Spleen (tissue), 13 donors: ENCODE measurements at regions of chr3 and their contacts with region 1.

Region 1: DNA sequence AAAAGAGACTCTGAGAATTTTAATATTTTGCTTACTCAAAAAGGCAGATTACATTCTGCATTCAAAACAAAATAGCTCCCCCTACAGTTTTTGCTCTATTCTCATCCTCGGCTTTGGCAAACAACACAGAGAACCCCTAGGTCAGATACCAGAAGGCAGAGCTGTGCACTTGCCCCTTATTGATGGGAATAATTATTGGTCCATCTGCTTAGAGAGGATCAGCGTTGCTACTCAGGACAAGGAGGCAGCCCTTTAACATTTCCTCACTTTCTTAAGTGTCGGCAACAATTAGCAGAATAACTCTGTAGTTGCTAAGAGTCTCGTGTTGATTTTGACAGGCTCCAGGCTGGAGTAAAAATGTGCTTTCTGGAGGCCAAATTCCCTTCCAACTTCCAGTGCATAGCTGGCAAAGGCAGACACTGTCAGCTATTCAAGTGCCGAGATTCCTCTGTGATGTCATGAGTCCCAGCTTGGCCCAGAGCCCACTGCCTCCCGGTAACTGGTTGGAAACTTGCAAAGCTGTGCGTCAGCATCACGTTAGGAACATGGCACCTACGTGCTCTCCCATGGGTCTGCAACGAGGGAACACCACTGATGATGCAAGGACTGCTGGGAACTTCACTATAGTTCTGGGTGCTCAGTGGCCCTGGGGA is 482.7 kb upstream of the ADAMTS9 start:
- DNase-seq: no peak
- H3K4me3 ChIP-seq: no peak overlapping the region
- H3K27ac ChIP-seq: peak overlapping the region in 2 of 8 donors; percentile 29 to 42
- H3K4me1 ChIP-seq: peaks cover 0 to 23% (median 6%) of the 10 kb centered on the region in 6 donors
- H3K27me3 ChIP-seq: no peaks in the 10 kb centered on the region
- CTCF ChIP-seq: peak in 5 of 11 experiments; percentile 31 to 52 (median 40)
- POLR2A ChIP-seq: no peak

Region 2: GRCh38 chr3:64685800-64686445 is 484.6 kb before region 1 on chr3:
- intact Hi-C with region 1: loop called (anchors 10 kb)
- DNase-seq: peak; percentile 86
- H3K4me3 ChIP-seq: peak overlapping the region; percentile 45 to 72 (median 52)
- H3K27ac ChIP-seq: peak overlapping the region; percentile 69 to 94 (median 85)
- H3K4me1 ChIP-seq: peaks cover 0 to 42% (median 14%) of the 10 kb centered on the region in 6 donors
- H3K27me3 ChIP-seq: peaks cover 0 to 56% (median 21%) of the 10 kb centered on the region in 7 donors
- CTCF ChIP-seq: peak in 7 of 11 experiments; percentile 19 to 51 (median 33)
- POLR2A ChIP-seq: peak in 2 of 3 donors; percentile 51 to 73

Region 3: DNA sequence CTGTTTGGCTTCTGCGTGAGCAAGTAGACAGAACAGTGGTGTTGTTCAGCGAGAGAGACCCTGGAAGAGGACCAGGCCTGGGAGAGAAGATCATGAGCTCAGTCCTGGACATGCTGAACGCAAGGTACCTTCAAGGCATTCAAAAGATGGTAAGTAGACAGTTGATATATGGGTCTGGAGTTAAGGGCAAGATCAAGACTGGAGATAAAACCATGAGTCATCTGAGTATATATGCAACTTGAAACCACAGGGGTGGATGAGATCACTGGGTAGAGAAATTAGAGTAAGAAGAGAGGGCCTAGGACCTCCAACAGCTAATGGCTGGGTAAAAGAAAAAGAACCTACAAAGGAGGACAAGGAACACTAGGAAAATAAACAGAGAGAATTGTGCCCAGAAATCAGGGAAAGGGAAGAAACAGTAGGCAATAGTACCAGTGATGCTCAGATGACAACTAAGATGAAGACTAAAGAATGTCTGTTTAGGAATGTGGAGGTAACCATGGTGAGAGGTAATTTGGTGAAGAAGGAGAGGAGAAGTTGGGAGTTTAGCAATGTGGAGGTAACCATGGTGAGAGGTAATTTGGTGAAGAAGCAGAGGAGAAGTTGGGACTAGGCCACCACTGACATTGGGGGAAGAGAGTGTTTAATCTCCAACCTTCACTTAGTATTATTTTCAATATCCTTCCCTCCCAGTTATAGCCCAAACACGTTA is 139.5 kb before region 1 on chr3:
- intact Hi-C with region 1: no loop called
- DNase-seq: no peak
- H3K4me3 ChIP-seq: no peak overlapping the region
- H3K27ac ChIP-seq: no peak overlapping the region
- H3K4me1 ChIP-seq: no peaks in the 10 kb centered on the region
- H3K27me3 ChIP-seq: no peaks in the 10 kb centered on the region
- CTCF ChIP-seq: no peak
- POLR2A ChIP-seq: no peak

Region 4: DNA sequence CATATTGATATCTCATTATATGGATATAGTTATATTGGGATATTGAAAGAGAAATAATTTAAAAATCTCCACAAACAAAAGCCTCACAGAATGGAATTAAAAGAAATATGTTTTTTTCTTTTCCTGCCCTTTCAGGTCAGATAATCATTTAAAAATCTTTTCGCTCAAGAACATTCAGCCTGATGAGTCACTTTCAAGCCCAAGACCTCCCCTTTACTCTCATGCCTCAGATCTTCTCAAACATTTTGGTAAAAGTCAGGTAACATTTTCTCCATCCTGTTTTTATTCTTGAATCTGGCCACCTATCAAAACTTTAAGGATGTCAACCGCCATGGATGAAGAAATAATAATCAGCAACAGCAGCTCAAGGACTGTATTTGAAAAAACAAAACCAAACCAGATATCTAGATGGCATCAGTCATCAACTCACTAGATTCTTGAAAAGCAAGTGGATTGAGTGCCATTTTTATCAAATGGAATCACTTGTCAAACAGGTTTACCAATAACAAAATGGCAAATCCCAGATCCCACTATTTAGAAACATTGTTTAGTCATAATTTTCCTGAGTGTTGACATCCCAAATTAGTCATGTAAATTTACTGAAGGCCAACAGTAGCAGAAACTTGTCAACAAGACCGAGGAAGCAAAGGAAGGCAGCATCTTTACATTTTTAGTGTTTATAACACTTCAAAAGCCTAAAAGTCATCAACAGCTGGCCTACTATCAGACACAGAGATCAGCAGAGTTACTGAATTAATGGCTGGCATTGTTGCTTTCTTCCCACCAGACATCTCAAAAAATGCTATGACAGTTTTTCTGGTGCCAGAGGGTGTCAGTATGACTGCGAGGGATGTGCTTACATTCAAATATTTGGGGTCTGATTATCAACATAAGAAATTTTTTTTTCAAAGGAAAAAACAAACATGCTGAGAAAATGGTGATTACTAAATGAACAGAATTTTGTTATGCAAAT is 423.6 kb after region 1 on chr3:
- intact Hi-C with region 1: no loop called
- DNase-seq: no peak
- H3K4me3 ChIP-seq: no peak overlapping the region
- H3K27ac ChIP-seq: no peak overlapping the region
- H3K4me1 ChIP-seq: peaks cover 0 to 23% (median 5%) of the 10 kb centered on the region in 6 donors
- H3K27me3 ChIP-seq: peaks cover 0 to 26% (median 0%) of the 10 kb centered on the region in 7 donors
- CTCF ChIP-seq: no peak
- POLR2A ChIP-seq: no peak